ENCODE measurements at regions of chr11 and their contacts with region 1.

Region 1: GRCh38 chr11:83249972-83250593 is 36.1 kb downstream of the CCDC90B start:
- DNase-seq: peak in 1 of 2 donors; percentile 68
- H3K4me3 ChIP-seq: no peak overlapping the region
- H3K27ac ChIP-seq: no peak overlapping the region
- H3K4me1 ChIP-seq: peaks cover 0 to 7% (median 0%) of the 10 kb centered on the region in 4 donors
- H3K27me3 ChIP-seq: no peaks in the 10 kb centered on the region
- CTCF ChIP-seq: peak in 5 of 7 experiments; percentile 33 to 66 (median 54)
- EP300 ChIP-seq: no peak
- POLR2A ChIP-seq: no peak

Region 2: GRCh38 chr11:82906244-82906654 is 343.8 kb before region 1 on chr11:
- intact Hi-C with region 1: loop called (anchors 5 kb)
- DNase-seq: peak in 1 of 2 donors; percentile 28
- H3K4me3 ChIP-seq: no peak overlapping the region
- H3K27ac ChIP-seq: no peak overlapping the region
- H3K4me1 ChIP-seq: peaks cover 4 to 10% (median 6%) of the 10 kb centered on the region in 4 donors
- H3K27me3 ChIP-seq: no peaks in the 10 kb centered on the region
- CTCF ChIP-seq: peak in 4 of 7 experiments; percentile 17 to 66 (median 58)
- EP300 ChIP-seq: no peak
- POLR2A ChIP-seq: no peak

Region 3: GRCh38 chr11:83193315-83194280 is 56.5 kb before region 1 on chr11 and contains the start of gene ANKRD42:
- intact Hi-C with region 1: no loop called
- DNase-seq: peak; percentile 92 to 99
- H3K4me3 ChIP-seq: peak within 1 kb of the TSS; percentile 66 to 85 (median 75)
- H3K27ac ChIP-seq: peak within 1 kb of the TSS; percentile 75 to 95 (median 91)
- H3K4me1 ChIP-seq: peaks cover 27 to 52% (median 41%) of the 10 kb centered on the region in 4 donors
- H3K27me3 ChIP-seq: no peaks in the 10 kb centered on the region
- CTCF ChIP-seq: no peak
- EP300 ChIP-seq: peak; percentile 46
- POLR2A ChIP-seq: peak in 1 of 4 donors; percentile 70
- total RNA-seq, gene ANKRD42: 0.87 to 21.0 (median 5.4) TPM